Left ventricle myocardium inferior (tissue), 1 donor: ENCODE measurements at regions of chr17 and their contacts with region 1.

Region 1: DNA sequence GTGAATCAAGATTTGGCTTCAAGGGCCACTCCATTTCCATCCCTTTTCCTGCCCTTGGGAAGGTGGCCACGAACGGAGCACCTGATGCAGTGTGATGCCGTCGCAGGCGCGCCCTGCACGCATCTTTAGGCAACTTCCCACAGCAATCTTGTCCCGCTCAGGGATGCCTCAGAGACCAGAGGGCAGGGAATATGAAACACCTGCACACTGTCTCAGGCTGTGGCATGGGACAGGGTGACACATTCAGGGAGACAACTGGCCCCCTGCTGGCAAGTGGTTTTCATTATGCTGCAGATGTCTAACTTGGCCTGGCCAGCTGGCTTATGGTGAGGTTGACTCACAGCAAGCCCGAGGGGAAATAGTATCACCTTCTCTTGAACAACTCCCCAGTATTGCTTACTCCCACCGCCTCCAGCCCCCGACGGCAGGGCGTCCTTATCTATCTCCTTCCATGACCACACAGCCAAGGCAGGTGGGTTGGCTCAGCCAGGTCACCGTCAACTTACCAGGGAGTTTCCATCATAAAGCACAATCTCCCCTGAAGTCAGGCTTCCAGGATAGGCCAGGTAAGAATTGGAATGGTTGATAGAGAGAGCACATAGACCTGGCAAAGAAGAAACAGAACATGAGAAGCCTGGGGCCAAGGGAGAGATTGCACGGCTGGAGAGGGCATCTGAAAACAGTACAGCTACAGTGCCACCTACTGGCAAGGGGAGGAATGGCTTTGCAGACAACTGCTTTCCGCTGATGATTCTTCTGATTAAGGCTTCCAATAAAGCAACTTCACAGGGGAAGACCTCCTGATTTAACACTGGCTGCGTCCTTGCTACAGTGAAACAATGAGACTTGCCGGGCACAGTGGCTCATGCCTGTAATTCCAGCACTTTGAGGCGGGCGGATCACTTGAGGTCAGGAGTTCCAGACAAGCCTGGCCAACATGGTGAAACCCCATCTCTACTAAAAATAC is 21.1 kb downstream of the WIPI1 start:
- DNase-seq: peak; percentile 66
- H3K4me3 ChIP-seq: no peak overlapping the region
- H3K27ac ChIP-seq: peak overlapping the region; percentile 82
- H3K4me1 ChIP-seq: peaks cover 85% of the 10 kb centered on the region
- H3K27me3 ChIP-seq: no peaks in the 10 kb centered on the region
- CTCF ChIP-seq: peak; percentile 93

Region 2: DNA sequence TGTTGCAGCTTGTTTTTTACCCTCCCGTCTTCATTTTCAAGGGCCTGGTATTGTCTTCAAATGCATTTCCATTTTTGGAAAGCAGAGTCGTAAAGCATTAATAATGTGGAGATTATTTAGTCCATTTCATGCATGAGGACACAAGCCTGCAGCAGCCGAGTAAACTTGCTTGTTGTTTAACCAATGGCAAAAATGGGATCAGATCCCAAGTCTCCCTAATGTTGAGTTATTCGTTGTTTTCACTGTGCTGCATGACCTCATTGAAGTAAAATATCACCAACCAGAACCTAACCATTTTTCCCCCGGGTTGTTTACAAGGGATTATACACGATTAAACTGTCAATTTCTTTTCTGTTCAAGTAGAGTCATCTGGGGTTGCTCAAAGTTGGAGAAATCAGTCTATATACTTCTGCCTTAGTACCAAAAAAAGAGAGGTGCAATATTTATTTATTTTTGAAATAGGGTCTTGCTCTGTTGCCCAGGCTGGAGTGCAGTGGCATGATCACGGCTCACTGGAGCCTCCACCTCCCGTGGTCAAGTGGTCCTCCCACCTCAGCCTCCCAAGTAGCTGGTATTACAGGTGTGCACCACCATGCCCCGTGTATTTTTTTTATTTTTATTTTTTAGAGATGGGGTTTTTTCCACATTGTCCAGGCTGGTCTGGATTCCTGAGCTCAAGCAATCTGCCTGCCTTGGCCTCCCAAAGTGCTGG is 176.0 kb before region 1 on chr17:
- intact Hi-C with region 1: loop called (anchors 10 kb)
- DNase-seq: no peak
- H3K4me3 ChIP-seq: no peak overlapping the region
- H3K27ac ChIP-seq: peak overlapping the region; percentile 83
- H3K4me1 ChIP-seq: peaks cover 29% of the 10 kb centered on the region
- H3K27me3 ChIP-seq: no peaks in the 10 kb centered on the region
- CTCF ChIP-seq: no peak

Region 3: DNA sequence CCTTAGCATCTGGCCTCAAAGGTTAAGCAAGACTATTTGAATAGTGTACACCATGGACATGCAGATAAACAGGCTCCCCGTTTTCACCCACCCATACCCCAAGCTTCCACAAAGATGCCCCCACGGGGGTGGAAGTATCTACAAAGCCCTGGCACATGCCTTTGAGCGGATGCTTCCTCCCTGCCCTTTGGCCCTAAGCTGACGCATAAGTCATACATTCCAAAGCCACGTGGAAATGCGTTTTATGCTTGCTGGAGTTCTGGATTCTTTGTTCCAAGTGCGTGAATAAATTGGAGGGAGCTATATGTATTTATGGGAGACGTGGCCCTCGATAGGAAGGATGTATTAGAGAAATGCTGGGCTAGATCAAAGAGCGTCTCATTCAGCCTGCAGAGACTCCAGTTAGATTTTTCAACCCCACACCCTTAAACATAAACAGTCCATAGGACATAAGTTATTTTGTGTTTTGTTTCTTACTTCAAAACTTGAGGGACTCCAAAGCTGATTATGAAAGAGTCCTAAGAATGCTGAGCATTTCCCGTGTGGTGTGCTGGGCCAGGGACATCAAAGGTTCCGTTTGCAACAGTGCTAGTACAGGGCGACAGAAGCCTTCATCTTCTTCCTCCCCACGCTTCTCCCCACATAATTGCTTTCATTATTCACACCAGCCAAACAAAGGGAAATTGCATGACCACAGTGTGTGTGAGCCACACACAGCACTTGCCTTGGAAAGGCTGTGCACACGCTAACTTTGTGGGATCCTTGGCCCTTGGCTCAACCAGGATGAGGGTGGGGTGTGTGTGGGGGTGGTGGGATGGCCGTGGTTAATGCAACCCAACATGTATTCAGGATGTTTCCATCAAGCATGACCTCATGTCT is 52.5 kb before region 1 on chr17:
- intact Hi-C with region 1: no loop called
- DNase-seq: no peak
- H3K4me3 ChIP-seq: no peak overlapping the region
- H3K27ac ChIP-seq: peak overlapping the region; percentile 75
- H3K4me1 ChIP-seq: peaks cover 76% of the 10 kb centered on the region
- H3K27me3 ChIP-seq: no peaks in the 10 kb centered on the region
- CTCF ChIP-seq: no peak